CD4-positive, alpha-beta T cell (primary cell): ENCODE measurements at regions of chr7 and their contacts with region 1.

Region 1: DNA sequence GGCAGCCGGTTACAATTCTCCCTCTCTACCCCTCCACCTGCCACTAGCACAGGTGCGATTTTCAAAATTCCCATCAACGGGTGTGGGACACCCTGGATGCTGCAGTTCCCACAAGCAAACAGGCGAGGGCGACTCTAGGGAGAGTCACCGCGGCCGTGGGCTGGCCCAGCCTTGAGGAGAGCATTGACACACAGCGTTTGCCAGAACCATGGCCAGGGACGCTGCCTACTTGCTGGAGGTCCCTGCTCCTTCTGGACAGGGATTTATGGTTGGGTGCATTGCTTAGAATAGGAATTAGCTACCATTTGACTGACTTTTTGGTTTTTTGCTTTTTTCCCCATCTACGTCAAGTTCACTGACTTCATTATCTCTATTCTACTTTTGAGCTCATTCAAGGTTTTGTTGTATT is 19.0 kb upstream of the CLDN4 start:
- DNase-seq: peak in 13 of 14 experiments; percentile 19 to 70 (median 43)
- ATAC-seq: peak; percentile 81
- H3K4me3 ChIP-seq: no peak overlapping the region
- H3K4me3 Mint-ChIP-seq: no peak overlapping the region
- H3K27ac ChIP-seq: no peak overlapping the region
- H3K27ac Mint-ChIP-seq: no peak overlapping the region
- H3K4me1 ChIP-seq: peaks cover 4% of the 10 kb centered on the region
- H3K4me1 Mint-ChIP-seq: no peaks in the 10 kb centered on the region
- H3K27me3 ChIP-seq: peaks cover 0 to 4% of the 10 kb centered on the region in 2 experiments
- H3K27me3 Mint-ChIP-seq: peaks cover 9% of the 10 kb centered on the region
- CTCF ChIP-seq: peak; percentile 61

Region 2: GRCh38 chr7:73851410-73852234 is 39.9 kb after region 1 on chr7:
- CTCF ChIA-PET with region 1: no interaction called
- POLR2A ChIA-PET with region 1: no interaction called
- intact Hi-C with region 1: loop called (anchors 1 kb)
- DNase-seq: peak in 3 of 14 experiments; percentile 44 to 69 (median 59)
- ATAC-seq: peak; percentile 74
- H3K4me3 ChIP-seq: no peak overlapping the region
- H3K4me3 Mint-ChIP-seq: peak overlapping the region; percentile 42
- H3K27ac ChIP-seq: no peak overlapping the region
- H3K27ac Mint-ChIP-seq: peak overlapping the region; percentile 63
- H3K4me1 ChIP-seq: peaks cover 15% of the 10 kb centered on the region
- H3K4me1 Mint-ChIP-seq: peaks cover 6% of the 10 kb centered on the region
- H3K27me3 ChIP-seq: peaks cover 0 to 6% of the 10 kb centered on the region in 2 experiments
- H3K27me3 Mint-ChIP-seq: peaks cover 20% of the 10 kb centered on the region
- CTCF ChIP-seq: no peak